Activated T-helper 2 cell treated with anti-CD3 and anti-CD28 coated beads, Interferon-gamma antibody, Interleukin-2, Interleukin-4, amounts not matched to agents 10 μg/mL and 5 μg/mL and 100 μg/mL, durations not matched to agents 14 hours and 24 hours and 36 hours (primary cell): ENCODE measurements at regions of chr1 and their contacts with region 1.

Region 1: GRCh38 chr1:233790662-233791375 is 113.7 kb upstream of the SLC35F3 start:
- DNase-seq: peak; percentile 10
- H3K4me3 Mint-ChIP-seq: no peak overlapping the region
- H3K27ac Mint-ChIP-seq: no peak overlapping the region
- H3K4me1 Mint-ChIP-seq: no peaks in the 10 kb centered on the region
- H3K27me3 Mint-ChIP-seq: peaks cover 8% of the 10 kb centered on the region

Region 2: DNA sequence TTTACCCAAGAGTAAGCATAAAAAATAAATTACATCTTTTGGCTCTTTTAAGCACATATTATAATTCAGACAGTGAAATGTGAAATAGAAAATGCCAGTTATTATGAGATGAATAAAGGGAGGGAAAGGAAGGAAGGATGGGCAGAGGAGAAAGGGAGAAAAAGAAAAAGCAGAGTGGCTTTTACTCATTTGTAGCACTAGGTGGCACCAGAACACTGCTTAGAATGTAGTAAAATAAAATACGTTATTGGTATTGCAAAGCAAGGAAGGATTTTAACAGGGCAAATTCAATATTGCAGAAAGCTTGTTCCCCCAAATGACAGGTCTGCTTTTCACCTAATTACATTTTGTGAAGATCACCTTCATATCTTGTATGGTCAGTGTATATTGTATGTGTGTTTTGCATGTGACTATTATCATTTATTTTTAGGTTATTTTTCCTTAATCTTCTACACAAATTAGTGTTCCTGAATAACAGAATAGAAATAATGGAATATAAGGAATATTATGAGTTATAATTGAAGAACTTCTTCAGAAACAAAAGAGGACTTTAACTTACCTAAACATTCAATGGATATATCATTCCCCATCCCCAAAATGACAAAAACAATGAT is 486.2 kb before region 1 on chr1:
- intact Hi-C with region 1: loop called (anchors 2 kb)
- DNase-seq: no peak
- H3K4me3 Mint-ChIP-seq: no peak overlapping the region
- H3K27ac Mint-ChIP-seq: no peak overlapping the region
- H3K4me1 Mint-ChIP-seq: peaks cover 2% of the 10 kb centered on the region
- H3K27me3 Mint-ChIP-seq: peaks cover 20% of the 10 kb centered on the region

Region 3: GRCh38 chr1:233394860-233395717 is 395.7 kb before region 1 on chr1:
- intact Hi-C with region 1: loop called (anchors 1 kb)
- DNase-seq: no peak
- H3K4me3 Mint-ChIP-seq: no peak overlapping the region
- H3K27ac Mint-ChIP-seq: no peak overlapping the region
- H3K4me1 Mint-ChIP-seq: no peaks in the 10 kb centered on the region
- H3K27me3 Mint-ChIP-seq: peaks cover 21% of the 10 kb centered on the region

Region 4: DNA sequence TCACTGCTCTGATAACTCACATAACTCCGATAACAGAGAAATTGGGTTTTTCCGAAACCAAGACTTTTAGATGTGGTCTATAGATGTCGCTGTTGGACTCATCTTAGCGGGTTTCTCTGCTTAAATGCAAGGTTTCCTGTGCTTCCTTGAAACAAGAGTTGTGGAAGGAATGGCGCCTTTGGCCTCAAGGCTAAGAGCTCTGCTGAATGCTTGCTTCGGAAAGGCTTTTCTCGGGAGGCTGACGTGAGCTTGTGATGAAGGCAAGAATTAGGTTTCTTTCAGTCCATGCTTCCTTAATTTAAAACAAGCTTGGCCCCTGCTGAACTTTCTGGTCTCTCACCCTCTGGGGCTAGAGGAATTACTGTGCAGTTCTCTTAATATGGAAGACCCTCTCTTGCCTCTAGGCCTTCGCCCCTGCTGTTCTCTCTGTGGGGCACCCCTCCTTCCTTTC is 349.8 kb before region 1 on chr1:
- intact Hi-C with region 1: loop called (anchors 1 kb)
- DNase-seq: no peak
- H3K4me3 Mint-ChIP-seq: no peak overlapping the region
- H3K27ac Mint-ChIP-seq: no peak overlapping the region
- H3K4me1 Mint-ChIP-seq: peaks cover 2% of the 10 kb centered on the region
- H3K27me3 Mint-ChIP-seq: peaks cover 13% of the 10 kb centered on the region

Region 5: DNA sequence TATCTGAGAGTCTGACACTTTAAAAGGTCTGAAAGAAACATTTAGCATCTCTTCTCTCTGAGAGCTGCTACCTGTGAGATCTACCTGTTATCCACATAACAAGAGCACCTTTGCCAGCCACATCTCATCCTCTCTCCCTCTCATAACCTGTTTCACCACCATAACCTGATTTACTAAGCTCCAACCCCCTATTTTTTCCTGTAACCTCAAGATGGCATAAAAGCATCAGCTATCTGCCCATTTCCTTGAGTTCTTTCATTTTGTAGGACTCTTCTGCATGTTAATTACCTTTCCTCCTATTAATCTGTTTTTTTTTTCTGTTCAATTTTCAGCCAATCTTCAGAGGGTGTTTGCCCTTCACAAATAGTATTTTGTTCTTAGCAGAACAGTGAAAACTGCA is 313.5 kb before region 1 on chr1:
- intact Hi-C with region 1: loop called (anchors 1 kb)
- DNase-seq: no peak
- H3K4me3 Mint-ChIP-seq: no peak overlapping the region
- H3K27ac Mint-ChIP-seq: no peak overlapping the region
- H3K4me1 Mint-ChIP-seq: no peaks in the 10 kb centered on the region
- H3K27me3 Mint-ChIP-seq: peaks cover 18% of the 10 kb centered on the region

Region 6: DNA sequence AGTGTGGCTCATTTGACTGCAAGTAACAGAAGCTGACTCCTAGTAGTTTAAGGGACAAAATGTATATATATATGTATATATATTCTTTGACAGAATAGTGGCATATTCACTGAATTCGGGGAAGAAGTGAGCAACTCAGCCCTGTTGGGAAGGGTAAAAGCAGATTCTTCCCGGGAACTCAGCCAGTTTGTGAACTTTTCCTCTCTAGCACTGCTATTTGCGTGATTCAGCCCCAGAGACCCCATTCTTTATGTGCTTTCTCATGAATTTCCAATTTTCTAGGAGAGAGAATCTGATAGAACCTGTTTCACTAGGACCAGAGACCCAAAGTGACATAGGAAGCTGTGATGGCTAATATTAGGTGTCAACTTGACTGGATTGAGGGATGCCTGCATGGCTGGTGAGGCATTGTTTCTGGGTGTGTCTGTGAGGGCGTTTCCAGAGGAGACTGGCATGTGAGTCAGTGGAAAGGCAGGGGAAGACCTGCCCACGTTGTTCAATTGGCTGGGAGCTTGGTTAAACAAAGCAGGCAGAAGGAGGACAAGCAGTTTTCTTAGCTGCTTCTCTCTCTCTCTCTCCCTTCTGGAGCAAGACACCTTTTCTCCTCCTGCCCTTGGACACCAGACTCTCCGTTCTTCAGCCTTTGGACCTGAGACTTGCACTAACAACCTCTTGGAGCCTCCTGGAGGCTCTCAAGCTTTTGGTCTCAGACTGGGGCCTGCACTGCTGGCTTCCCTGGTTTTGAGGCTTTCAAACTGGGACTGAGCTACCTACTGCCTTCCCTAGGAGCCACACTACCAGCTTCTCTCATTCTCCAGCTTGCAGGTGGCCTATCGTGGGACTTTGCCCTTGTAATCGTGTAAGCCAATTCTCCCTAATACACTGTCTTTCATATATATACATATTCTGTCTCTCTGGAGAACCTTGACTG is 270.3 kb before region 1 on chr1:
- intact Hi-C with region 1: loop called (anchors 10 kb)
- DNase-seq: no peak
- H3K4me3 Mint-ChIP-seq: no peak overlapping the region
- H3K27ac Mint-ChIP-seq: no peak overlapping the region
- H3K4me1 Mint-ChIP-seq: peaks cover 6% of the 10 kb centered on the region
- H3K27me3 Mint-ChIP-seq: peaks cover 5% of the 10 kb centered on the region